ENCODE measurements at regions of chr15 and their contacts with region 1.

Region 1: GRCh38 chr15:77870195-77871065 is 207.1 kb downstream of the TBC1D2B start:
- DNase-seq: peak; percentile 69 to 87
- ATAC-seq: peak; percentile 71
- H3K4me3 ChIP-seq: no peak overlapping the region
- H3K27ac ChIP-seq: no peak overlapping the region
- H3K4me1 ChIP-seq: no peaks in the 10 kb centered on the region
- H3K27me3 ChIP-seq: no peaks in the 10 kb centered on the region

Region 2: DNA sequence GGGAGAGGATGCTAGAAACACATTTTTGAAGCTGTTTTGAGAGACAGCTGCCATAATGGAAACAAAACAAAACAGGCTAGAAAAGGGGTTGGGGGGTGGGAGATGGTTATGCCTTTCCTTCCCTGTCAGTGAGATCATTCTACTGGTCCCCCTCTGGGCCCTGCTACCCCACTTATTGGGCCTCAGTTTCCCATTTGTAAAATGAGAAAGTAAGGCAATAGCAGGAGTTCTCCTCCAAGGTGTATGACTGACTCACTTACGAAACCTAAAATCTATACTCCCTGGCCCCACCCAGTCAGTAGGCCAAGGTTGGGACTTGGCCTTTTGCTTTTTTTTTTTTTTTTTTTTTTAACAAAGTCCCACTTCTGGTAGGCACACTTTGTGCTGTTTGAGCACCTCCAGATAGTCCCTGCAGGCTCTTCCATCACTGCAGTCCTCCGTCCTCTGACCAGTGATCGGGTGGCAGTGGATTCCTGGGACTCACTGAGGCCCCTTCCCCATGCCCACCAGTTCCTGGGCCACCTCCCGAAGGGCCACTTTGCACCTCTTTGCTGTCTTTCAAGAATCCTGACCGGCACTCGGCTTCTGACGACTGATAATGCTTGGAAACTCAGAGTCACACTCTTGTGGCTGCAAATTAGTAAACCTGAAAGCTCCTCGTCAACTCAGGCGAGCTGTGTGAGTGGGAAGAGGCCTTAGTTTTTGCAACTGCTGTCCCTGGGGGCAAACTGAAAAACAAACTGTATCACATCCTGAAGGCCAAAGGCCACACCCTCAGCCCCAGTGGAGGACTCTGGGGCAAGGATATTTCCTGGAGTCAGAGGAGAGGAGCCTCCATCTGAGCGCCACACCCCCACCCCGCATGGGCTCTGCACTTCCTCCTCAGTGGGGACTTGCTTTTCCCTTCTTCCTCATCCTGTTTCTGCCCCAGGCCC is 882.2 kb before region 1 on chr15:
- intact Hi-C with region 1: no loop called
- DNase-seq: peak; percentile 79 to 87
- ATAC-seq: no peak
- H3K4me3 ChIP-seq: no peak overlapping the region
- H3K27ac ChIP-seq: no peak overlapping the region
- H3K4me1 ChIP-seq: no peaks in the 10 kb centered on the region
- H3K27me3 ChIP-seq: no peaks in the 10 kb centered on the region

Region 3: DNA sequence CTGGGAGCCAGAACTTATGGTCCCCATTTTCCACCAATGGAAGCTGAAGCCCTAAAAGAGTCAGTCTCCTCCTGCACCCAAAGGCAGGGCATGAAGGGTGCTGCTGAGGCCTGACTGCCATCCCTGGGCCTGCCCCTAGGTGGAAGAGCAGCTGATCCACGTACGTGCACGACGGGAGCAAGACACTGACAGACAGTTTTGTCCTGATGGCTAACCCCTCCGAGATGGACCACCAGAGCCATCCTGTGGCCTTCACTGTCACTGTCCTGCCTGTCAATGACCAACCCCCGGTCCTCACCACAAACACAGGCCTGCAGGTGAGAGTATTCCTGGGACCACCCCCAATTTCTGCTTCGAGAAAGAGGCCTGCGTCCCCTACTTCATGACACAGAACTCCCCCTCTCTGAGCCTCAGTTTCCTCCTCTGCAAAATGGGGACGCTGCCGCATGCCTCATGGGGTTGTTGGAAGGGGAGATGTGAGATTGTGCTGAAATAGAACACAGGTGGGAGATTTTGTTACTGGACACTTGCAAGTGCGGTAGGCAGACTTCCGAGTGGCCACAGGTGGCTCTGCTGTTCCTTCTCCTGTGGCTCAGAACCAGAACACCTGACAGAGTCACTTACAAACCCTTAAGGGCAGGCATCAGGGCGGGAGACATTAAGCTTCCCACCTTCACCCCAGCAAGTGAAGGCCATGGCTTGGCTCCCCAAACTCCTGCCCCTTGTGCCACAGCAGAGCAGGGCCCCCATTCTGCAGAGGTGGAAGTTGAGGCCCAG is 31.7 kb after region 1 on chr15:
- intact Hi-C with region 1: loop called (anchors 1 to 5 kb)
- DNase-seq: peak in 1 of 2 donors; percentile 51
- ATAC-seq: no peak
- H3K4me3 ChIP-seq: no peak overlapping the region
- H3K27ac ChIP-seq: no peak overlapping the region
- H3K4me1 ChIP-seq: no peaks in the 10 kb centered on the region
- H3K27me3 ChIP-seq: no peaks in the 10 kb centered on the region

Measured in aorta (tissue), 5 donors.